ENCODE measurements at regions of chr1 and their contacts with region 1.

Region 1: DNA sequence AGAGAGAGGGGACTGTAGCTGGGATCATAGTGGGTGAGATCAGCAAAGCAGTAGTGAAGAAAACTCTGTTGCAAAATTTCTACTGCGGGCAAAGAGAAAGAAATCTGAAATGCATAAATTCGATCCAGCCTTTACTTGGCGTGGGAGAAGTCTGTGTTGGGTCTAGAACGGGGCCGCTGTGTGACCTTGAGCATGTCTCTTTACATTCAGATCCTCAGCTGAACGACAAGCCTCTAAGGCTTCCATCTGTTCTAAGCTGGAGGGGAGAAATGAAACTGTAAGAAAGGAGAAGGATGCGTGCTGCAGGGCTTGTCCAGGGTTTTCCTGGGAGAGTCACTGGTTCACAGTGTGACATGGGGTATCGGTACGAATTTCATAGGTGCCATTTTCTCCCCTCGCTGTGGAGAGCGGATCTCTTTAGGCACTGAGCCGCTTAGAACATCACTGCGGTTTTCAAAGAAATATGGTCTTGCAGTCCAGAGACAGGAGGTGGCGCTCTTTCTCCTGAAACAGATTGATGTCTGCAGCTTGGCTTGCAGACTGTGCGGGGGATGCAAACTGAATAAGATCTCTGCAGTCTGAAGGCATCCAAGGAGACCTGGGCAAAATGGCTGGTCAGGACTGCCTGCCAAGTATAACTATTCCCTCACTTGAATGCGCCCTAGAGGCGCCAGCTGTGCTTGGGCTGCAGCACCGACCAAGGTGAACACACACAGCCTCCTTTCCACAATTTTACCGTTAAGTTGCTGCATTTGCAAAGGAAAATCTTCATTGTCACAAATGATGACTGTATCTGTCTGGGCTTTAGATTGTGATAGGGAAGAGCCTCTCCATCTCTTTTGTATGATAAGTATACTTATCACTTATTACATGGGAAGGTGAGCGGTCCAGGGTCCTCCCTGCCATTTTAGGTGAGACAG is 104.1 kb downstream of the XCL2 start:
- DNase-seq: peak; percentile 73 to 76
- H3K4me3 ChIP-seq: no peak overlapping the region
- H3K4me3 Mint-ChIP-seq: no peak overlapping the region
- H3K27ac Mint-ChIP-seq: no peak overlapping the region
- H3K4me1 ChIP-seq: peaks cover 8% of the 10 kb centered on the region; the same call in 1 of the 2 replicates
- H3K4me1 Mint-ChIP-seq: peaks cover 29% of the 10 kb centered on the region
- H3K27me3 ChIP-seq: no peaks in the 10 kb centered on the region
- H3K27me3 Mint-ChIP-seq: no peaks in the 10 kb centered on the region
- CTCF ChIP-seq: peak; percentile 68 to 80

Region 2: DNA sequence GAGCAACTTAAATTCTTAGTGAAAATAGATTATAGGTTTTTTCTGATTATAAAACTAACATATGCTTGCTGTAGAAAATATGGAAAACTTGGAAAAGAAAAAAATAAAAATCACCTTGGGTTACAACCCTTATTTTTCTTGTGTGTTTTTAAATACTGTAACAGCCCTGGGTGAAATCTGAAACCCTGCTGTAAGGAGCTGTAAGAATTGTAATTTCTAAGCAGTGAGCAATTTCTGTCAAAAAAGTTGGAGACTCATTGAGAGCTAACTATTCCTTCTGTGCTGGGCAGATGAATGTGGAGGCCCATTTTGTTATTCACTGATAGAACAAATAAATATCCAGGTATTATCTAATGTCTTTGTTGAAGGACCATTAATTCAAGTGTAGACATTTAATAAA is 568.4 kb before region 1 on chr1:
- CTCF ChIA-PET with region 1: no interaction called
- POLR2A ChIA-PET with region 1: no interaction called
- intact Hi-C with region 1: no loop called
- DNase-seq: no peak
- H3K4me3 ChIP-seq: no peak overlapping the region
- H3K4me3 Mint-ChIP-seq: no peak overlapping the region
- H3K27ac Mint-ChIP-seq: no peak overlapping the region
- H3K4me1 ChIP-seq: peaks cover 31% of the 10 kb centered on the region
- H3K4me1 Mint-ChIP-seq: no peaks in the 10 kb centered on the region
- H3K27me3 ChIP-seq: no peaks in the 10 kb centered on the region
- H3K27me3 Mint-ChIP-seq: no peaks in the 10 kb centered on the region
- CTCF ChIP-seq: no peak

Region 3: DNA sequence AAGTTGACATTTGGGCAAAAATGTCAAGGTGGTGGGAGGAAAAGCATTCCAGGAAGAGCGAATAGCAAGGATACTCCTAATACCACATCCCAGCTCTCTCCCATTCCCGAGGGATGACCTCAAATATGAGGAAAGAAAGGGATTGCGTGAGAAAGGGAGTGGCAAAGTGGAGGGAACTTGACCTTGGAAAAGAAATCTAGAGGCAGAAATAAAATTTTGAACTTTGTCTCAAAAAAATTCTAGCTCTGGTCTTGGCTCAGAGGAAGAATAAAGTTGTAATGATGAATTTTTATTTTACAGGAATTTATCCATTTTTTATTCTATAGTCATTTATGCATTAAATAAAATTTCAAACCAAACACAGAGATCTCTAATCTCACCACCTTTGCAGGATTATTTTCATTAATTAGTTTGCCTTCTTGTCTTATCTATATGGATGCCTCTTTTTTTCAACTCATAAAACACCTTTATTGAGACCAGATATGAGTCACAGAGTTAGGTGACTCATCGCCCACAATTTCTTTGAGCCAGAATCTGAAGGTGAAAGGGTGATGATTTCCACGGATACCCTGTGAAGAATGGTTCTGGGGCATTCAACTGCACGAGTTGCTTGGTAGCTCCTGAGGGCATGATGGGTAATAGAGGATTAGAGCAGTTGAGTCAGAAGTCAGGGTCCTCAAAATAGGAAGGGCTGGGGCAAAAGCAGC is 31.0 kb before region 1 on chr1:
- CTCF ChIA-PET with region 1: no interaction called
- POLR2A ChIA-PET with region 1: no interaction called
- intact Hi-C with region 1: no loop called
- DNase-seq: peak in 1 of 2 experiments; percentile 37
- H3K4me3 ChIP-seq: no peak overlapping the region
- H3K4me3 Mint-ChIP-seq: no peak overlapping the region
- H3K27ac Mint-ChIP-seq: peak overlapping the region; percentile 21
- H3K4me1 ChIP-seq: peaks cover 37% of the 10 kb centered on the region
- H3K4me1 Mint-ChIP-seq: peaks cover 31% of the 10 kb centered on the region
- H3K27me3 ChIP-seq: no peaks in the 10 kb centered on the region
- H3K27me3 Mint-ChIP-seq: no peaks in the 10 kb centered on the region
- CTCF ChIP-seq: no peak

Region 4: DNA sequence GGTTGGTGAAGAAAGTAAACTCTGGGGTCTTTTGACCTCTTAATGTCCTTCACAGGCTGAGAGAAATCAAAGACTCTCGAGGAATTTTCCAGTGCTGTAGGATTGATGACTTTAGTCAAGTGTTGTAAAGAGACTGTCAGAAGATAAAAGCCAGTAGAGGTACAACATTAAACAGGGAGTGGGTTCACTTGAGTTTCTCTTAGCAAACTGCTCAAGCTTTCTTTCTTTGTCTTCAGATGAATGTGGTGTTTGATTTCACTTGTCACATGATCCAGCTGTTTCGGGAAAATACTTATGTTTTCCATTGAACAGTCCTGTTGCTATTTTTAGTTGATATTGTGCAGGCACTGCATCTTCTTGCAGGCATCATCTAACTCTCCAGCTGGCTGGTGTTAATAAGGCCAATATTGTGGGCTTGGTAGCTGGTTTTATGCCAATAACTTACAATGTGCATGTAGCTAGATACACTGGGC is 58.5 kb after region 1 on chr1:
- CTCF ChIA-PET with region 1: no interaction called
- POLR2A ChIA-PET with region 1: no interaction called
- intact Hi-C with region 1: loop called (anchors 5 kb)
- DNase-seq: no peak
- H3K4me3 ChIP-seq: no peak overlapping the region
- H3K4me3 Mint-ChIP-seq: no peak overlapping the region
- H3K27ac Mint-ChIP-seq: no peak overlapping the region
- H3K4me1 ChIP-seq: peaks cover 55% of the 10 kb centered on the region
- H3K4me1 Mint-ChIP-seq: peaks cover 32% of the 10 kb centered on the region
- H3K27me3 ChIP-seq: no peaks in the 10 kb centered on the region
- H3K27me3 Mint-ChIP-seq: no peaks in the 10 kb centered on the region
- CTCF ChIP-seq: no peak

Region 5: GRCh38 chr1:168520052-168520751 is 80.5 kb after region 1 on chr1:
- CTCF ChIA-PET with region 1: no interaction called
- POLR2A ChIA-PET with region 1: no interaction called
- intact Hi-C with region 1: no loop called
- DNase-seq: no peak
- H3K4me3 ChIP-seq: no peak overlapping the region
- H3K4me3 Mint-ChIP-seq: no peak overlapping the region
- H3K27ac Mint-ChIP-seq: no peak overlapping the region
- H3K4me1 ChIP-seq: no peaks in the 10 kb centered on the region; the same call in 1 of the 2 replicates
- H3K4me1 Mint-ChIP-seq: peaks cover 24% of the 10 kb centered on the region
- H3K27me3 ChIP-seq: no peaks in the 10 kb centered on the region
- H3K27me3 Mint-ChIP-seq: no peaks in the 10 kb centered on the region
- CTCF ChIP-seq: no peak

Region 6: DNA sequence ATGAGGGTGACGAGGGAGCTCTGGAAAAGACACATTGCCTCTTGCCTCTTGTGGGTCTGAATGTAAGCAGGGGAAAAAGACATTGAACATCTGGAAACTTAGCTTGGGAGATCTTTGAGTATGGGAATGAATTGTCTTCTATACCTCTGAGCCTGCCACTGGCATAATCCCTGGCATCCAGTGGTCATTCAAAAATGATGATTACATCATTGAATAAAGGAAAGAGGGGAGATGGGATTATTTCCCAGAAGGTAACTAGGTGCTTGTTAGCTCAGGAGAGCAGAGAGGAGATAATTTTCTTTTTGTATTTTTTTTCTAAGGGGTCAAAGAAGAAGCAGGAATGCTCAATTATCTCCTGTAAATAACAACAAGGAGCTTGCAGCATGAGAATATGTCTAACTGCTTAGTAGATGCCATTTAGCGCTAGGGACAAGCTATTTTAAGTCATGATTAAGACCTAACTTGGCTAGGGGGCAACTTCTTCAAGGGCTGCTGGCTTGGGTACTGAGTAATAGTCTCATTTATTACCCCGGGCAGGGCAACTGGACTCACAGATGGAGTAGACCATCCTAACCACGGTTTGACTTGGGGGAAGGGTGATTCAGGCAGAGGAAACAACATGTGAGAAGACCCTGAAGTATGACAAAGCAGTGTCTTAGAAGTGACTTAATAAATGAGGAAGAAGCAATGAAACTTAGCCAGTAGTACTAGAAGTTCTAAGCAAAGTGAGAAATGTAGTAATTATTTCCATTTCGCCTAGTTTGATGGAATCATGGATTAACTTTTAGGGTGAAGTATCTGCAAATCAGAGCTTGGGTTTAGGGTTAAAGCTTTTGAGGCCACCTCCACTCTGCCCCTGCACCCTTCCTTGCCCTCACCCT is 115.1 kb after region 1 on chr1:
- CTCF ChIA-PET with region 1: interaction called, 3 read pairs
- POLR2A ChIA-PET with region 1: no interaction called
- intact Hi-C with region 1: loop called (anchors 5 kb)
- DNase-seq: no peak
- H3K4me3 ChIP-seq: no peak overlapping the region
- H3K4me3 Mint-ChIP-seq: no peak overlapping the region
- H3K27ac Mint-ChIP-seq: peak overlapping the region; percentile 18
- H3K4me1 ChIP-seq: peaks cover 63% of the 10 kb centered on the region
- H3K4me1 Mint-ChIP-seq: peaks cover 31% of the 10 kb centered on the region
- H3K27me3 ChIP-seq: no peaks in the 10 kb centered on the region
- H3K27me3 Mint-ChIP-seq: no peaks in the 10 kb centered on the region
- CTCF ChIP-seq: no peak

Region 7: GRCh38 chr1:168572633-168573032 is 132.9 kb after region 1 on chr1:
- CTCF ChIA-PET with region 1: no interaction called
- POLR2A ChIA-PET with region 1: no interaction called
- intact Hi-C with region 1: loop called (anchors 1 kb)
- DNase-seq: no peak
- H3K4me3 ChIP-seq: no peak overlapping the region
- H3K4me3 Mint-ChIP-seq: no peak overlapping the region
- H3K27ac Mint-ChIP-seq: no peak overlapping the region
- H3K4me1 ChIP-seq: 0 out of 2 replicates have a peak, but pooled peaks cover 7% of the 10 kb centered on the region
- H3K4me1 Mint-ChIP-seq: no peaks in the 10 kb centered on the region
- H3K27me3 ChIP-seq: no peaks in the 10 kb centered on the region
- H3K27me3 Mint-ChIP-seq: no peaks in the 10 kb centered on the region
- CTCF ChIP-seq: no peak